Spleen (tissue), 13 donors: ENCODE measurements at regions of chr17 and their contacts with region 1.

Region 1: GRCh38 chr17:30134551-30134950 is 17.9 kb downstream of the NSRP1 start:
- DNase-seq: no peak
- H3K4me3 ChIP-seq: no peak overlapping the region
- H3K27ac ChIP-seq: no peak overlapping the region
- H3K4me1 ChIP-seq: peaks cover 4 to 25% (median 8%) of the 10 kb centered on the region in 6 donors
- H3K27me3 ChIP-seq: no peaks in the 10 kb centered on the region
- CTCF ChIP-seq: no peak
- POLR2A ChIP-seq: no peak

Region 2: GRCh38 chr17:30161601-30162000 is 27.1 kb after region 1 on chr17:
- intact Hi-C with region 1: no loop called
- DNase-seq: no peak
- H3K4me3 ChIP-seq: no peak overlapping the region
- H3K27ac ChIP-seq: no peak overlapping the region
- H3K4me1 ChIP-seq: peaks cover 0 to 42% (median 8%) of the 10 kb centered on the region in 6 donors
- H3K27me3 ChIP-seq: no peaks in the 10 kb centered on the region
- CTCF ChIP-seq: no peak
- POLR2A ChIP-seq: no peak

Region 3: DNA sequence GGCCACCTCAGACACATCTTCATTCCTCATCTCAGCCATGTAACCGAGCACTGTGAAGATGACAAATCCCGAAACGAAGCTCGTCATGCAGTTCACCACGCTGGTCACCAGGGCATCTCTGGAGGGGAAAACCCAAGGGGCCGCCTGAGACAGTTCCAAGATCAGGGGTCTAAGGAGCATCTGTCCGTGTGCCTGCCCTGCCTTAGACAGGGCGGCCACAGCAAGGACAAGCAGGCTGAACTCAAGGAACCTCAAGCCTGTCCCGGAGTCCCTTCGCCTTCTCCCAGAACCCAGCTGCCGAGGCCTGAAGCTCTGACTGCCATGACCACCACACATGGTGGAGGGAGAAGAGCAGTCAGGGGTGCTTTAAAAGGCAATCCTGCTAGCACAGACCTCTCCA is 78.2 kb after region 1 on chr17:
- intact Hi-C with region 1: no loop called
- DNase-seq: no peak
- H3K4me3 ChIP-seq: no peak overlapping the region
- H3K27ac ChIP-seq: no peak overlapping the region
- H3K4me1 ChIP-seq: no peaks in the 10 kb centered on the region
- H3K27me3 ChIP-seq: peaks cover 0 to 3% (median 0%) of the 10 kb centered on the region in 7 donors
- CTCF ChIP-seq: no peak
- POLR2A ChIP-seq: no peak

Region 4: GRCh38 chr17:30278032-30278431 is 143.5 kb after region 1 on chr17:
- intact Hi-C with region 1: loop called (anchors 10 kb)
- DNase-seq: no peak
- H3K4me3 ChIP-seq: no peak overlapping the region
- H3K27ac ChIP-seq: no peak overlapping the region
- H3K4me1 ChIP-seq: no peaks in the 10 kb centered on the region
- H3K27me3 ChIP-seq: no peaks in the 10 kb centered on the region
- CTCF ChIP-seq: peak in 5 of 11 experiments; percentile 8 to 30 (median 28)
- POLR2A ChIP-seq: no peak

Region 5: DNA sequence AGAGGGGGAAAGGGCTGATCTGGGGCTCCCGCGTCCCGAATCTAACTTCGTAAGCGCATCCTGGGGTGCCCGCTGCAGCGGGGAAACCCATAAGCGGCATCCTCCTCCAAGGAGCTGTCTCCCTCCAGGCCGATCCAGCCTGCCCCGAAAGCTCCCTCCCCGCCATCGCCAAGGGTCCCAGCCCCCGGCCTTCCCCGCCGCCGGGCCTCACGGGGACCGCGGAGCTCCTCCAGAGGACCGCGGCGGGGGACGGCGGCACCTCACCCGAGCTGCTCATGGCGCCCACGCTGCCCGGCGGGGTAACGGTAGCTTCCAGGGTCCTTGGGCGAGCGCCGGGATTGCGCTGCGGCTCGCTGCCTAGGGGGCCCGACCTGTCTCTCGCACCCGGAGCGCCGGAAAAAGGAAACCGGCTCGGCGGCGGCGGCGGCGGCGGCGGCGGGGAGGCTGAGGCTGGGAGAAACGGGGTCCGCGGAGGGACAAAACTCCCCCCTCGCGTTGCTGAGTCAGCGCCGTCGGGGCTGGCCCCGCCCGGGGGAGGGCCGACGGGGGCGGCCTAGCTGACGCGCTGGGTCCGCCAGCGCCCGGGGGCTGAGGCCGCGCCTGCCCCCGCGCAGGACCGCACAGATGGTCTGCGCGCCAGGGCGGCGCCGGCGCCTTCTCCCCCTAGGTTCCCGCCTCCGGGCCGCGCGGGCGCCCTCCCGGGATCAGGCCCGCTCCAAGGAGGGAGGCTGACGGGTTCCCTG is 157.2 kb after region 1 on chr17 and contains the start of gene BLMH:
- intact Hi-C with region 1: no loop called
- DNase-seq: peak; percentile 94
- H3K4me3 ChIP-seq: peak within 1 kb of the TSS; percentile 85 to 100 (median 98)
- H3K27ac ChIP-seq: peak within 1 kb of the TSS; percentile 47 to 86 (median 77)
- H3K4me1 ChIP-seq: peaks cover 10 to 32% (median 21%) of the 10 kb centered on the region in 6 donors
- H3K27me3 ChIP-seq: peaks cover 0 to 3% (median 0%) of the 10 kb centered on the region in 7 donors
- CTCF ChIP-seq: no peak
- POLR2A ChIP-seq: peak in 1 of 3 donors; percentile 52
- total RNA-seq, gene BLMH: 26.2 to 35.5 (median 30.5) TPM